ENCODE measurements at regions of chr13 and their contacts with region 1.

Region 1: DNA sequence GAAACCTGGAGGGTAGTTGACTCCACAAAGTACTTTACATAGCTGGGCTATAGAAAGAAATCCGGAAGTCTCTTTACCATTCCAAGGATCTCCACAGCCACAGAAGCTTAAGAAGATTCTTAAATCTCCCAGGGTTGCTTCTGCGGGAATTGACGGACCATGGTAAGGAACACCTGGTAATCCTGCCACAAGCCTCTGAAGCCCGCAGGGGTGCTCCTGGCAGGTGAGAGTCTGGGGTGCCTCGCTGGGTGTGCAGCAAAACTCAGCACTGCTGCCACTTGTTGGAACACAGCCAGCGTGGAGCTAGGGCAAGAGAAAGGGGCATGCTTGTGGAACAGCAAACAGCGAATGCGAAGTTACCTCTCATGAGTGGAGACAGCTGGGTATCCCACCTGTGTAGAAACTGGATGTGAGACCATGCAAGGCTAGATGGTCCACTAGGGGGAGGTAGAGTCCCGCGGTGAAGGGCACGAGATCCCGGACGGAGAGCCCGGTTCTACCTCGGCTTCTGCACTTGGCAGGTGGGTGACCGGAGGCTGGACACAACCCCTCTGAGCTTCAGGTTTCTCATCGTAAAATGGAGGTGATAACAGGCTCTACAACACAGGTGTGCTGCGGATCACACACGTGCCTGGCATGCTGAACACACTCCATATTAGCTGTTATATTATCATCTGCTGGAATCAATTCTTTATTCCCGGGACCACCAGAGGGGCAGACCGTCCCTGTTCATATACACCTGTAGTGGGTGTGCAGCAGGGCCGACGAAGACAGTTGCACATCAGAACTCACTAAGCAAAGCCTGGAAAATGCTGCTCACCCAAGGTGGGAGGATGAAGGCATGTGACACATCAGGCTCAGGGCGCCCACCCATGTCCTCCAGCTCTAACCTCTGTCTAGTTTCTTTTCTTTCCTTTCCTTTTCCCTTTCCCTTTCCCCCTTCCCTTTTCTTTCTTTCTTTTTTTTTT is 24.1 kb upstream of the UBAC2 start:
- DNase-seq: peak; percentile 85
- H3K4me3 ChIP-seq: peak overlapping the region; percentile 6 to 26; a peak in 2 of 4 replicates
- H3K27ac ChIP-seq: no peak overlapping the region
- H3K4me1 ChIP-seq: peaks cover 0 to 6% of the 10 kb centered on the region in 2 experiments; a peak in 1 of 4 replicates
- H3K27me3 ChIP-seq: no peaks in the 10 kb centered on the region
- CTCF ChIP-seq: peak; percentile 86
- EP300 ChIP-seq: no peak
- RAD21 ChIP-seq: peak; percentile 92

Region 2: GRCh38 chr13:98998831-98999638 is 177.6 kb before region 1 on chr13:
- CTCF ChIA-PET with region 1: no interaction called
- POLR2A ChIA-PET with region 1: no interaction called
- DNase-seq: no peak
- H3K4me3 ChIP-seq: no peak overlapping the region
- H3K27ac ChIP-seq: peak overlapping the region in 1 of 2 experiments; percentile 56; a peak in 1 of 4 replicates
- H3K4me1 ChIP-seq: peaks cover 21 to 28% of the 10 kb centered on the region in 2 experiments; a peak in 3 of 4 replicates
- H3K27me3 ChIP-seq: no peaks in the 10 kb centered on the region
- CTCF ChIP-seq: no peak
- EP300 ChIP-seq: no peak
- RAD21 ChIP-seq: no peak

Region 3: DNA sequence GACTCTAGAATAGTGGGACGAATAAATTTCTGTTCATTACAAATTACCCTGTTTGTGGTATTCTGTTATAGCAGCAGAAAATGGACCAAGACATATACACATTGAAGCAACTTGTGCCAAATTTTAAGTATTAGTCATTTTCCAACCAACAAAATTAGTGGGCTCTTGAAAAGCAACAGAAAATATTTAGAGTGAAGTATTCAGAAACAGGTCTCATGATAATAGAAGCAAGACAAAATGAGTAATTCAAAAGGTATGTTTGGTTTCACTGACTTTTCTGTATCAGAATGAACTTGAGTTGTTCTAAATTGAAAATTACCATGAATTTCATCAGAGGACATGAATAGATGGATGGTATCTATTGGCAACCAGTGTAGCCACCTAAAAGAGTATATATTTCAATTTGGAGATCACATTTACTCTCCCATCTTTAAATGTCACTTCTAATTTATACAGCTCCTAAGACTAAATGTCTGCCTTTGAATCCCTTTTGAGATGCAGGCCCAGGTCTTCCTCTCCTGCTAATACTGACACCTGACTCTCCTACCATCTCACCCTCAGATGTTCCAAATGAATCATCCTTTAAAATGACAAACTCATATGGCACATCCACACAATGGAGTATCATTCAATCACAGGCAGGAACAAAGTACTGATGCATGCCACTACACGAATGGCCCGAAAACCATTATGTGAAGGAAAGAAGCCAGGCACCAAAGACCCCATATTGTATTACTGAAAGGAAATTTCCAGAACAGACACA is 158.0 kb before region 1 on chr13:
- CTCF ChIA-PET with region 1: no interaction called
- POLR2A ChIA-PET with region 1: no interaction called
- DNase-seq: no peak
- H3K4me3 ChIP-seq: no peak overlapping the region
- H3K27ac ChIP-seq: peak overlapping the region; percentile 25 to 71; a peak in 3 of 4 replicates
- H3K4me1 ChIP-seq: peaks cover 0 to 6% of the 10 kb centered on the region in 2 experiments; a peak in 2 of 4 replicates
- H3K27me3 ChIP-seq: no peaks in the 10 kb centered on the region
- CTCF ChIP-seq: no peak
- EP300 ChIP-seq: no peak
- RAD21 ChIP-seq: no peak

Region 4: GRCh38 chr13:99045396-99045795 is 131.2 kb before region 1 on chr13:
- CTCF ChIA-PET with region 1: no interaction called
- POLR2A ChIA-PET with region 1: no interaction called
- DNase-seq: no peak
- H3K4me3 ChIP-seq: no peak overlapping the region
- H3K27ac ChIP-seq: no peak overlapping the region
- H3K4me1 ChIP-seq: peaks cover 11% of the 10 kb centered on the region in 2 experiments; a peak in 3 of 4 replicates
- H3K27me3 ChIP-seq: no peaks in the 10 kb centered on the region
- CTCF ChIP-seq: no peak
- EP300 ChIP-seq: no peak
- RAD21 ChIP-seq: no peak

Region 5: DNA sequence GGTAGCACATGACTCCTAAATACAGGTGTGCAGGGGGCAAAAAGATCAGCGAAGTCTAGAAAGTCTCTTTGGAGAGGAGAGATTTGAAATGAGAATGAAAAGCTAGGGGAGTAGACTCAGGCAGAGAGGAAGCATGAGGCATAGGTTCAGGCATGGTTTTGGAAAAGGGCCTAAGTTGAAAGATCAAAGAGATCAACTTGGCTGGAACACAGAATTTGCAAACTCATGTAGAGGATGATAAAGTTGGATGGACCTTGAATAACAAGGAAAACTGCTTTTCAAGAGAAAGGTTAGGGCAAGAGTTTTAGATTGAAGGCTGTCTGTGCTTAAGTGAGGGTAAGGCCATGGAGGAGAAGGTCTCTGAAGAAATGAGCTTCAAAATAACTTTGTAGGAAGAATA is 23.4 kb before region 1 on chr13:
- CTCF ChIA-PET with region 1: interaction called, 16 read pairs
- POLR2A ChIA-PET with region 1: interaction called, 4 read pairs
- DNase-seq: no peak
- H3K4me3 ChIP-seq: no peak overlapping the region
- H3K27ac ChIP-seq: no peak overlapping the region
- H3K4me1 ChIP-seq: peaks cover 4 to 6% of the 10 kb centered on the region in 2 experiments; a peak in 1 of 4 replicates
- H3K27me3 ChIP-seq: no peaks in the 10 kb centered on the region; the same call in 1 of the 2 replicates
- CTCF ChIP-seq: no peak
- EP300 ChIP-seq: no peak
- RAD21 ChIP-seq: no peak

Region 6: DNA sequence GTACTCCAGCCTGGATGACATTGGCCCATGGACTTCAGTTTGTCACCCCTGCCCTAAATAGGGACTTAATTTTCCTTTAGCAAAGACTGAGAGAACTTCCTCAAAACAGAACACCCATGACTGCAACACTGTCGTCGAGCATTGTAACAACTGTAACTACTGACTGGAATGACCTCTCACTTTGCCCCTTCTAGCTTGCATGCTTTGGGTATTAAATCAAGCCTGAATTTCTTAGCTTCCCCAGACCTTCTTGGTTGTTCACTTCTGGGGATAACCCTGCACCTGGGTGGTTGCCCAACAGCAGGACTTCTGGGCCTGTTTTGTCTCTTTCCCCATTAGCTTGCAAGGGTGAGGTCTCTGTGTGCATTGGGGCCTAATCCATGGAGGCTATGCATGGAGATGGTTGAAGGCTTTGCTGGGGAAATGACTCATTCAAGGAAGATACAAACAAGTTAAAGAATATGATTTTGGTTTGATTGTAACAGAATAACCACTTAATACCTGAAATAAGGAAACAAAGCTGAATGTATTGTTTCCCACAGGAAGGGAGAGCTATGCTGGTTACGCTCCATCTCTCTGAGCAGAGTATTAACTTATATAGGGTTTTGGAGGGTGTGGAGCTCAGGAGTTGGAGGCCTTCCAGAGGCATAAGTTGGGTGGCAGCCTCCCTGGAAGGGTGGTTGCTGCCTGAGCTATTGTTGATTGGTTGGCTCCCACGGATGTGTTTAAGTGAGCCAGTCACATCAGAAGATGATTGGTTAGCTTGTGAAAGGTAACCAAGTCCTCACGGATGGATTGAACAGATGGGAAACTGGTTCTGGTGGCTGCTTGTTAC is 10.6 kb before region 1 on chr13:
- CTCF ChIA-PET with region 1: interaction called, 32 read pairs
- POLR2A ChIA-PET with region 1: no interaction called
- DNase-seq: no peak
- H3K4me3 ChIP-seq: no peak overlapping the region
- H3K27ac ChIP-seq: no peak overlapping the region
- H3K4me1 ChIP-seq: no peaks in the 10 kb centered on the region
- H3K27me3 ChIP-seq: no peaks in the 10 kb centered on the region; the same call in 1 of the 2 replicates
- CTCF ChIP-seq: no peak
- EP300 ChIP-seq: no peak
- RAD21 ChIP-seq: no peak

Region 7: GRCh38 chr13:99250982-99251825 is 74.6 kb after region 1 on chr13:
- CTCF ChIA-PET with region 1: interaction called, 18 read pairs
- POLR2A ChIA-PET with region 1: no interaction called
- DNase-seq: no peak
- H3K4me3 ChIP-seq: no peak overlapping the region
- H3K27ac ChIP-seq: no peak overlapping the region; a peak in 1 of 4 replicates
- H3K4me1 ChIP-seq: peaks cover 0 to 2% of the 10 kb centered on the region in 2 experiments; a peak in 1 of 4 replicates
- H3K27me3 ChIP-seq: no peaks in the 10 kb centered on the region
- CTCF ChIP-seq: no peak
- EP300 ChIP-seq: no peak
- RAD21 ChIP-seq: no peak

Region 8: DNA sequence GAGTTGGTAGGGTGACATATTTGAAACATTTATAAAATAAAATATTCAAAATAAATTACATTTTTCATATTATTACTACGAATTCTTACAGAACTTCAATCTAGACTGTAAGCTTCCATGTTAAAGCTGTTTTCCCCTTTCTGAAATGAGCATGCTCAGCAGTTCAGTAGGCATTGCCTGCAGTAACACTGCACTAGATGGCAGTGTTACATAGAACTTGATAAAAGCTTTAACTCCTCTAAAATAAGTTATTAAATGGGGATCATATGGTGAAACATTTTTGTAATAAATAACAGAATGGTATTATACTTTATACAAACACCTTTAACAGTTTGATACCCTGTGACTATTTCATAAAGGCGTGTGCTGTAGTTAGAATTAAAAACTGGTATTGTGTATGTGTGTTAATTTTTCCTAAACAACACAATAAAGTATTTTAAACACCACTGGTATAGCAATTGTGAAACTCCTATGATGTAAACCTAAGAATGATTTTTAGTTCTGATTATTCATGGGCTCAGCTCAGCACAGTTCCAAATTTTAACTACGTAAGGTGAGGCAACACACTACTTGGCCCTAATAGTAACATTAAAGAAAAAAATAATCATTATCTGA is 93.1 kb after region 1 on chr13:
- CTCF ChIA-PET with region 1: interaction called, 184 read pairs
- POLR2A ChIA-PET with region 1: no interaction called
- DNase-seq: peak; percentile 17
- H3K4me3 ChIP-seq: no peak overlapping the region; a peak in 1 of 4 replicates
- H3K27ac ChIP-seq: no peak overlapping the region
- H3K4me1 ChIP-seq: no peaks in the 10 kb centered on the region
- H3K27me3 ChIP-seq: no peaks in the 10 kb centered on the region
- CTCF ChIP-seq: peak; percentile 90
- EP300 ChIP-seq: no peak
- RAD21 ChIP-seq: peak; percentile 85

Region 9: DNA sequence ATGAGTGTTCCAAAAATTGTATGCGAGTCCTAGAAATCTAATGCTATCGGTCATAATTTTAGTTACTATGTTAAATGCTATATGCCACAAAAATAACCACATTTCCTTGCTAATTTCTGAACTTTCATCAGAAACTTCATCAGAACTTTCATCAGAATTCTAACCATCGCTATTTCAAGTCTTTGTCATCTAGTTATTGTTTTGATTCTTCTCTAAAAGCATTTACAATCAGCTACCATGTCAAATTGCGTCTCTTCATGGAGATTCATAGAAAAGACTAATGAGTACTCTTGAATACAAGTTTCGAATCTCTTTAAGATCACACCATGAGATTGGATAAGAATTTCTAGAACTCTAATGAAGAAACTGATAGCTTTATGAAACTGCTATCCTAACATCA is 272.0 kb after region 1 on chr13:
- CTCF ChIA-PET with region 1: interaction called, 10 read pairs
- POLR2A ChIA-PET with region 1: no interaction called
- DNase-seq: no peak
- H3K4me3 ChIP-seq: no peak overlapping the region
- H3K27ac ChIP-seq: no peak overlapping the region
- H3K4me1 ChIP-seq: no peaks in the 10 kb centered on the region
- H3K27me3 ChIP-seq: no peaks in the 10 kb centered on the region
- CTCF ChIP-seq: no peak
- EP300 ChIP-seq: no peak
- RAD21 ChIP-seq: no peak

Measured in SK-N-SH (cell line).